ENCODE measurements at regions of chr4 and their contacts with region 1.

Region 1: DNA sequence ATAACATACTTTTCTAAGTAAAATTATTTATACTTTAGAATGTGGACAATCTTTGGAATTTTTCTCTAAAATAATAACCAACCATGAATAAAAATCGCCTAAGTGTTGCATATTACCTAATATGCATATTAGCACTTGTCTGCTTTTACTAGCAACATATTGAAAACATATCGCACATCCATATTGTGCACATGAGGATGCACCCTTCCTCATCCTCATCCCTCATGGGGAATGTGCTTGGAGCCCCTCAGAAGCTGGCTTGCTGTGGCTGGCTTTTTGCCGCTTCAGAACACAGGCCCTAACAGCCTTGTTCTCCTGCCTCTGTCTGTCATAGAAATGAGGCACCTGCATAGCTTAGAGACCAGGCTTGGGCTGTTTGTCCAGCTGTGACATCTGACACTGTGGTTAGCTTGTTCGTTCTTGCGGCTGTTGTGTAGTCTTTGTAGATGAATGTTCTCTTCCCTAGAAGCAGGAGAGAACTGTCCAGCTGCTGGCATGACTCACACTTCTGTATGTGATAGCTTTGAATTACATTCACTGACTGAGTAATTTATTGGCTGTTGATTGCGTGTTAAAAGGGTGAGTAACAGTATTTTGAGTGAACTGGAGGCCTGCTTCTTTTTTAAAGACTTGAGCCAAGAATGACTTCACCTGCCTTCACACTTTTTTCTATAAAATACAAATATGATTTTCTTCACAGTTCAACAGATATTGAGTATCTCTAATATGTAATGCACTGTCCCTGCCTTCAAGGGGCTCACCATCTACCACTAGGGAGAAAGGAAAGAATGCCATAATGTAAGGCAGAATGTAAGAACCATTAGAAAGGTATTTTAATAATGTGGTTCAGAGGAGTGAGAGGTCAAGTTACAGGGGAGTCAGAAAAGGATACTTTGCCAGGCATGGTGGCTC is 81.9 kb downstream of the HMGB2 start:
- DNase-seq: peak; percentile 97
- ATAC-seq: peak; percentile 100
- H3K4me3 ChIP-seq: no peak overlapping the region
- H3K27ac ChIP-seq: peak overlapping the region; percentile 76
- H3K4me1 ChIP-seq: peaks cover 17% of the 10 kb centered on the region
- H3K27me3 ChIP-seq: no peaks in the 10 kb centered on the region
- CTCF ChIP-seq: no peak

Region 2: DNA sequence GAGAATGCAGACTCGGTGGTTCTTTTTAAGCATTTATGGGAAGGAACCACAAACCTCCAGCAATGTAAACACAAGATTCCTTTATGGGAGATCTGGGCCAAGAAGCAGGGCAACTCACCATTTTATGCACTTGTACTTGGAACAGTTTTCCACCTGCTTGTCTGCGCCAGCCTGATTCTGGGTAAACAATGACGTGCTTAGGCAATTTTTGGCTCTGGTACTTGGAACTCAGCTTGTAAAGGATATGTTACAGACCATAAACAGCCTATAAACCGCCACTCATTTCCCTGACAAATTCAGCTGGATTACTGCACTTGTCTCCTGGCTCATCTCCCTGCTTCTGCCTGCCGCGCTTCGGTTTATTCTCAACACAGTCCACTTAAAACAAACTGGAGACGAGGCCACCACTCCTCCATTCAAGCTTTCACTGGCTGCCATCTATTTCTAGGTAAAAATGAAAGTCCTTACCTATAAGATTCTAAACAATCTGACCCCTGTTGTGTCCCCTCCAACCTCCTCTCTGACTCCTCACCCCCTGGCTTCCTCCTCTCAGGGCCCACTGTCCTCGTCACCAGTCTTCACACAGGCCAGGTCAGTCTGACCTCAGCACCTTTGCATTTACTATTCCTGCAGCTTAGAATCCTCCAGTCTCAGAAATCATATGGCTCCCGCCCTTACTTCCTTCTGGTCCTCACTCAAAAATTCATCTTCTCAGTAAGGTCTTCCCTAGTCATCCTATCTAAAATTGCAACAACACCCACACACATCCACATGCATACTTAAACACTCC is 289.5 kb before region 1 on chr4:
- CTCF ChIA-PET with region 1: no interaction called
- POLR2A ChIA-PET with region 1: no interaction called
- intact Hi-C with region 1: loop called (anchors 1 kb)
- DNase-seq: peak; percentile 93
- ATAC-seq: peak; percentile 98
- H3K4me3 ChIP-seq: no peak overlapping the region
- H3K27ac ChIP-seq: 0 out of 2 replicates have a peak overlapping the region, but pooled peaks have one; percentile 14
- H3K4me1 ChIP-seq: peaks cover 13% of the 10 kb centered on the region
- H3K27me3 ChIP-seq: peaks cover 19% of the 10 kb centered on the region
- CTCF ChIP-seq: no peak

Region 3: DNA sequence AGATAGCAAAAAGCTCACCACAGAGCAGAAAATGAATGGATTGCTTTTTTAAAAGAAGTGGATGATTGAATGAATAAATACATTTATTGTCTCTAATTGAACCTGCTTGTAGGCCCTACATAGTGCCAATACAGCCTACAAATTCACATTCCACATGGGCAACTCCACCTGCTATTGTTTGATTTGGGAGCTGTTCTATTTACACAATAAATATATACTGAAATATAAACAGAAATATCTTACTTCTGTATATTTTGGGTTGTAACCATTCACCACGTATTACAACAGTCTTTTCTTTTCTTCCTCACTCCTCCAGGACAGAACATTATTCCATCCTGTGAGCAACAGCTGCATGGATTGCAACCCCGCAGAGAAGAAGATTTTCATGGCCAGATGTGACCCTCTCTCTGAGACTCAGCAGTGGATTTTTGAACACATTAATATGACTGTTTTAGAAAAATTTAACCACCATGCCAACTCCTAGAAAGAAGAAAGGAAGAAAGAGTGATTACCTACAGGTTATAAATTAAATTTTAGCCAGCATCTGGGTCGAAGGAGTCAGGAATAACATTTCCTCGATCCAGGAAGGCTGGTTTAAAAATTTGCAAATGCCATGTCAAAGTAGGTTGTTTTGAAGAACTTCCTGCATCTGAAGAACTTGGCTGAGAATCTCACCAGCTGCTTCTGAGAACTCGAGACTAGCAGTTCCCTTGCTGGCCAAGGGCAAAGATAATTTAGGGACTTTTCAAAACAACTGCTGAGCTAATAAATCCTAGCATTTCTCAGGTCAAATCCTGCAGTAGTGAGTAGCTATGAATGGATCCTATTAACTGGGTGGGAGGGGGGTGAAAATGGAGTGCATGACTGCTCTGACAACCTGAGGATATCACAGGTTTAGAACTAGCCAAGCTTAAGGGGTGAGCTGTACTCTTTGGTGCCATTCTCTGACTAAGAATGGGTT is 212.4 kb before region 1 on chr4:
- CTCF ChIA-PET with region 1: no interaction called
- POLR2A ChIA-PET with region 1: no interaction called
- intact Hi-C with region 1: loop called (anchors 1 kb)
- DNase-seq: peak; percentile 41
- ATAC-seq: peak; percentile 53
- H3K4me3 ChIP-seq: peak overlapping the region; percentile 15; the same call in 1 of the 2 replicates
- H3K27ac ChIP-seq: peak overlapping the region; percentile 44
- H3K4me1 ChIP-seq: peaks cover 29% of the 10 kb centered on the region
- H3K27me3 ChIP-seq: no peaks in the 10 kb centered on the region
- CTCF ChIP-seq: no peak

Region 4: DNA sequence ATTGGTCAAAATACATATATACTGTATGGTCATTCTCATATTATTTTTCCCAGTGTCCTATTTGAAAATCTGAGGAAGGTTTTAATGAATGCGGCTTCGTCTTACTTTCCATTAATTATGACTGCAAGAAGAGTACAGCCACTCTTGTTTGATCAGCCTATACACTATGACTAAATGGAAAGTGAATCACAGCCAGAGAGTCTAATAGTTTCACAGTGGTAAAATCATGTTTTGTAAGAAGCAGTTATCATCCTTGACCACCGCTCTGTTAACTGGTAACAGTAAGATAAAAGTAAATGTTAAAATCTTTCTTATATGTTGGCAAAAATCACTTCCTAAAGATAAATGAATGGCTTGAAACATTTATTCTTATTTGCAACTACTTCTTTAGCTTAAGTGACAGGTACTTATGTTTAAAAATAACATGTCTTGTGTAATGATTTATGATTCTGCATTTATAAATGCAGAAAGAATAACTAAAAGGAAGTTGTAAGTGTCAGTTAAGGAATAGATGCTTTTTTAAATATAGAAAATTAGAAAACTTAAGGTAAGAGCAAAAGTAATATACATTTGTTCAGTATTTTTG is 70.4 kb before region 1 on chr4:
- CTCF ChIA-PET with region 1: no interaction called
- POLR2A ChIA-PET with region 1: no interaction called
- intact Hi-C with region 1: loop called (anchors 1 kb)
- DNase-seq: peak; percentile 77
- ATAC-seq: peak; percentile 80
- H3K4me3 ChIP-seq: peak overlapping the region; percentile 39
- H3K27ac ChIP-seq: peak overlapping the region; percentile 91
- H3K4me1 ChIP-seq: peaks cover 36% of the 10 kb centered on the region
- H3K27me3 ChIP-seq: no peaks in the 10 kb centered on the region
- CTCF ChIP-seq: no peak

Region 5: DNA sequence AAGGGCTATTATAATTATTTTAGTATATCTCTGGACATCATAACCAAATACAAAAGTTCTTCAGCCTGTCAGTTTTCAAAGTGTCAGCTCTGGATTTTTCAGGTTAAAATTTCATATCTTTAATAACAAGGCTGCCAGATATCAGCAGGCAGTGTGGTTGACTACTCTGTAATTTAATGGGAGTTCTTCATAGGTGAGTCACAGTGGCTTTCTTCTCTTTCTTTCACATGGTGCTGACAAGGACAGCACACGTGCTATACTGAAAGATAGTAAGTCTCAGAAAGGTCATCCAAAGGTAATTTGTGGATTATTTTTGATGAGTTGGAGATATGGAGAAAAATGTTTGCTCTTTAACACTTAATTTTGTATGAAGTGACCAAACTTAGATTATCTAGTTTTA is 40.4 kb before region 1 on chr4:
- CTCF ChIA-PET with region 1: no interaction called
- POLR2A ChIA-PET with region 1: no interaction called
- intact Hi-C with region 1: loop called (anchors 2 kb)
- DNase-seq: peak; percentile 80
- ATAC-seq: peak; percentile 91
- H3K4me3 ChIP-seq: no peak overlapping the region
- H3K27ac ChIP-seq: peak overlapping the region; percentile 79
- H3K4me1 ChIP-seq: peaks cover 48% of the 10 kb centered on the region
- H3K27me3 ChIP-seq: no peaks in the 10 kb centered on the region
- CTCF ChIP-seq: no peak

Measured in PC-3 (cell line).